OCI-LY7 (cell line): ENCODE measurements at regions of chr4 and their contacts with region 1.

Region 1: GRCh38 chr4:74874753-74875367 is 58.1 kb upstream of the PARM1 start:
- DNase-seq: peak; percentile 77
- H3K4me3 ChIP-seq: no peak overlapping the region
- H3K27ac ChIP-seq: no peak overlapping the region
- H3K4me1 ChIP-seq: no peaks in the 10 kb centered on the region
- CTCF ChIP-seq: peak; percentile 94

Region 2: DNA sequence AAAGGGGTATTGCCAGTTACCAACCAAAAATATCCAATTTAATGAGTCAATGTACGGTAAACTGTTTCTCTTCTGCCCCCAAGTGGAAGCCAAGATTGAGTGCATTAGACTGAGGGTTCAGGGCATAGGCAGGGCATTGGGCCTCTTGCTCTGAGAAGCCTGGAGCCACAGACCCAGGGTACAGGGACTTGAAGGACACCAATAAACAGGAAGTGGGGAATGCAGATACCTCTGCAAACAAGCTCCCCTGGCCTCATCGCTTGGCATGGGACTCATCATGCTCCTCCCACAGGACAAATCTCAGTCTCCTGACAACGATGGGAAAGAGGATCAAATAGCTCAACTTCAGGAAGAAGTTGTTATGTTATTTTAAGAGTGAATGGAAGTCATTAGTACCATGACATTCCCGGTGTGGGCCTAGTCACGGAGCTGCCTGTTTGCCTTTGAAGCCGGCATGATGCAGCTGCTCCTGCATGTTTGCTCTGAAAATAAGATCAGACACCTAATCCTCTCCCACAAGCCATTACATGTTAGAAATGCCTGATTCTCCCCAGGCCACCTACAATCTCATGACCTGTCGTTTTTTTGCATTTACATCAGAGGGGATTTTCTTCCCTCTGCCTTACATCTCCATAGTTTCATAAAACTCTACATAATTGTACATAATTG is 415.2 kb after region 1 on chr4:
- CTCF ChIA-PET with region 1: no interaction called
- POLR2A ChIA-PET with region 1: no interaction called
- intact Hi-C with region 1: loop called (anchors 2 kb)
- DNase-seq: peak; percentile 31
- H3K4me3 ChIP-seq: no peak overlapping the region
- H3K27ac ChIP-seq: no peak overlapping the region
- H3K4me1 ChIP-seq: no peaks in the 10 kb centered on the region
- CTCF ChIP-seq: peak; percentile 75

Region 3: DNA sequence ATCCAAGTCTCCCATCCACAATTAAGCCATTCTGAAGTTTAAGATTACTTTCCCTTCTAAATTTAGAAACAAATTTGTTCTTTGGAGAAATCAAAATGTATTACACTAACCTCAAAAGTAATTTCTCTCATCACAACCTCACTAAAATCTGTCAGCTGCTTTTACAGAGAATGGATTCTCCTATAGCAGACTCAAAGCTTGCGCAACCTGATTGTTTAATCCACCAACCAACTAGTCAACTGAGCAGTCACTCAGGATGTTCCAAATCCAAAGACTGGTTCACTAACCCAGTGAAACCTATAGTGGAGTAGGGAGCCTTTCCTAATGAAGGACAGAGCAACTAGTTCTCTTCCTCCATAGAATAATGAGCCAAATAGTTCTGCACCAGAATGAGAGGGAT is 595.0 kb after region 1 on chr4:
- CTCF ChIA-PET with region 1: no interaction called
- POLR2A ChIA-PET with region 1: no interaction called
- intact Hi-C with region 1: loop called (anchors 10 kb)
- DNase-seq: no peak
- H3K4me3 ChIP-seq: no peak overlapping the region
- H3K27ac ChIP-seq: no peak overlapping the region
- H3K4me1 ChIP-seq: peaks cover 5% of the 10 kb centered on the region
- CTCF ChIP-seq: no peak

Region 4: DNA sequence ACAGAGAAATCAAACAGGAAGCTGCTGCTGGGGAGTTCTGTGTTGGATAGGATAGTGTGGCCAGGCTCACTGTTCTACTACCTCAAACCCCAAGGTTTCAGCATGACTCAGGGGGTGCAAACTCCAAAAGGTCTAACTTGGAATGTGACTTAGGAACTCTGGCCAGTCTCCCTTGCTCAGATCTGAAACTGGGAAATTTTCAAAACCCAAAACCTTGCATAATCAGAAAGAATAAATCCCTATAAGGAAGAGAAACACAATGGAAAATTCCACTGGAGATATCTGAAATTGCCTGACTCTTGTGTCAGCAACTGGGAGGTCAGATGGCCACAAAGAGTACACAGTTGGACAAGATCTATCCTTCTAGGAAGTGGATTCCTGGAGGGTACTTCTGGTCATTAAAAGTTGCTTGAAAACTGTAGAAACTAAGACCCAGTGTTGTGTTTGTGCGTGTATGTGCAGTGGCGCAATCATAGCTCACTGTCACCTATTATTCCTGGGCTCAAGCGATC is 969.3 kb after region 1 on chr4:
- CTCF ChIA-PET with region 1: no interaction called
- POLR2A ChIA-PET with region 1: no interaction called
- intact Hi-C with region 1: loop called (anchors 10 kb)
- DNase-seq: no peak
- H3K4me3 ChIP-seq: no peak overlapping the region
- H3K27ac ChIP-seq: no peak overlapping the region
- H3K4me1 ChIP-seq: no peaks in the 10 kb centered on the region
- CTCF ChIP-seq: no peak